WTC11 (cell line): ENCODE measurements at regions of chr2 and their contacts with region 1.

Region 1: GRCh38 chr2:11688222-11689069 is 18.5 kb upstream of the NTSR2 start:
- DNase-seq: peak; percentile 87
- ATAC-seq: peak; percentile 79
- H3K4me3 Mint-ChIP-seq: peak overlapping the region; percentile 50
- H3K27ac Mint-ChIP-seq: no peak overlapping the region
- H3K4me1 Mint-ChIP-seq: peaks cover 18% of the 10 kb centered on the region
- H3K27me3 Mint-ChIP-seq: no peaks in the 10 kb centered on the region
- CTCF ChIP-seq: peak; percentile 76

Region 2: GRCh38 chr2:11659115-11659475 is 29.4 kb before region 1 on chr2:
- CTCF ChIA-PET with region 1: no interaction called
- POLR2A ChIA-PET with region 1: no interaction called
- DNase-seq: no peak
- ATAC-seq: no peak
- H3K4me3 Mint-ChIP-seq: no peak overlapping the region
- H3K27ac Mint-ChIP-seq: no peak overlapping the region
- H3K4me1 Mint-ChIP-seq: no peaks in the 10 kb centered on the region
- H3K27me3 Mint-ChIP-seq: peaks cover 4% of the 10 kb centered on the region
- CTCF ChIP-seq: no peak

Region 3: GRCh38 chr2:11669454-11670291 is 18.8 kb before region 1 on chr2 and contains the start of gene NTSR2:
- CTCF ChIA-PET with region 1: interaction called, 15 read pairs
- POLR2A ChIA-PET with region 1: no interaction called
- DNase-seq: peak; percentile 81
- ATAC-seq: peak; percentile 95
- H3K4me3 Mint-ChIP-seq: peak within 1 kb of the TSS; percentile 52
- H3K27ac Mint-ChIP-seq: no peak within 1 kb of the TSS; the same call in 1 of the 2 replicates
- H3K4me1 Mint-ChIP-seq: peaks cover 9% of the 10 kb centered on the region
- H3K27me3 Mint-ChIP-seq: peaks cover 33% of the 10 kb centered on the region
- CTCF ChIP-seq: no peak
- total RNA-seq, gene NTSR2: 0.16 TPM in 1 of 3 replicates, not detected in the others

Region 4: GRCh38 chr2:11676640-11677039 is 11.8 kb before region 1 on chr2:
- CTCF ChIA-PET with region 1: interaction called, 27 read pairs
- POLR2A ChIA-PET with region 1: no interaction called
- DNase-seq: no peak
- ATAC-seq: no peak
- H3K4me3 Mint-ChIP-seq: no peak overlapping the region
- H3K27ac Mint-ChIP-seq: no peak overlapping the region
- H3K4me1 Mint-ChIP-seq: peaks cover 41% of the 10 kb centered on the region
- H3K27me3 Mint-ChIP-seq: no peaks in the 10 kb centered on the region
- CTCF ChIP-seq: no peak

Region 5: DNA sequence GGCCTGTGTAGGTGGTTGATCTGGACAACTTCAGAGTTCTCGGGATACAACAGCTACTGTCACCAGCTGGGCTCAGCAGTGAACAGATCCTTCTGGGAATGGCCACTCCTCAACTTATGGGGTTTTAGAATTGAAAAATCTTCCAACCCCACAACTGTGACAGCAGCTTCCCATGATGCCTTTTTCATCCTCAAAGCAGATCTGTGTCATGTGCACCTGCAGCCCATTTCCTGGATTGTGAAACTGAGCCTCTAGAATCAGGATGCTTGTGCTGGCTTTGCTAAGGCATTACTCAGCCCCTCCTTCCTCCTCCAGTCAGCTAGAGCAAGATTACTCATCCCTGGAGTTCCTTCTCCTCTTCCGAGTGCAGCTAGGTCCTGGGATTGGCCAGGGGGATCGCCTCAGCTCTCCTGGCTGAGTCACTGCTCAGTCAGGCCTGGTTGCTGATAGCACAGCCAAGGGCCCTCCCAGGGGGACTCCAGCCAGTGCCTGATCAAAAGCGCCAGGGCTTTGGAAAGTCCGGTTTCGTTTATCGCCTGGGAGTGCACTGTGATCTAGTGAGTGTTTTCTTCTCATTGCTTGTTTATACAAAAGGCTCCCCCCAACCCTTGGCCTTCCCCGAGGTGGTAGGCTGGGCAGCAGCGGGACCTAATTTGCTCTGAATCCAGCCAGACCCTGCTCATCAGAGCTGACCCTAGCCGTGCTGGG is 55.6 kb after region 1 on chr2:
- CTCF ChIA-PET with region 1: interaction called, 17 read pairs
- POLR2A ChIA-PET with region 1: no interaction called
- DNase-seq: peak; percentile 77
- ATAC-seq: peak; percentile 62
- H3K4me3 Mint-ChIP-seq: no peak overlapping the region
- H3K27ac Mint-ChIP-seq: peak overlapping the region; percentile 90
- H3K4me1 Mint-ChIP-seq: peaks cover 55% of the 10 kb centered on the region
- H3K27me3 Mint-ChIP-seq: peaks cover 13% of the 10 kb centered on the region
- CTCF ChIP-seq: no peak

Region 6: GRCh38 chr2:11784747-11785610 is 96.5 kb after region 1 on chr2:
- CTCF ChIA-PET with region 1: interaction called, 33 read pairs
- POLR2A ChIA-PET with region 1: no interaction called
- DNase-seq: peak; percentile 80
- ATAC-seq: peak; percentile 91
- H3K4me3 Mint-ChIP-seq: peak overlapping the region; percentile 60
- H3K27ac Mint-ChIP-seq: no peak overlapping the region
- H3K4me1 Mint-ChIP-seq: peaks cover 4% of the 10 kb centered on the region; the same call in 1 of the 2 replicates
- H3K27me3 Mint-ChIP-seq: no peaks in the 10 kb centered on the region; the same call in 1 of the 2 replicates
- CTCF ChIP-seq: peak; percentile 89